Adrenal gland (tissue), 19 donors: ENCODE measurements at regions of chr9 and their contacts with region 1.

Region 1: DNA sequence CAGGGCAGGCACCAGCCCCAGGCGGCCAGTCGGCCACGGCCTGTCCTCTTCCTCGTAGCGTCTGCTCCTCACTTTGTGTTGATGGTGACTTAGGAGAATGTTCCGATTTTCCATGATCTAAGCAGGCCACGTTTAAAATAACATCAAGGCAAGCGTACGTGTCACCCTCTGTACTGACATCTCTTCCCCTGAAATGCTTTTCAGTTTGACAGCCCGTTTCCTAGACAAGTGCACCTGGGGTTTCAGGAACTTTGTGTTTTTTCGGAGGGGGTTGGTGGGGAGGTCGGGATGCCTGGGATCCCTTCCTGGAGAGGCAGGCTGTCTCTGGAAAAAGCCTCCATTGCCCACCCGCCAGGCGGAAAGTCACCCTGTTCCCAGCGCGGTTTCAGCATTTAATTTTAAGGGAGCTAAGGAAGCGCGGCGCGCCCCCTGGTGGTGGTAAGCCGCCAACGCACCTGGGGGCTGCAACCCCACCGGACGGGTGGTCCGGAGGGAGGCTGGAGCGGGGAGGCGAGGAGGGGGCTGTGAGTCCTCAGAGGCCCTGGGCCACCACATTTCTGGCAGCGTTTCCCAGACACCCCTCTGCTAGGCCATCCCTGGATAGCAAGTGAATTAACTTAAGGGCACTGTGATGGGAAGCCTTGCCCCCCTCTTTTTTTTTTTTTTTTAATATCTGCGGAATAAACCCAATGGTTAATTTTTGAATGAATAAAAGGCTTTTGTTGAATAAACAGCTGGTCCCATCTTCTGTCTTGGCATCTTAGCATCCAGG is 29.5 kb upstream of the HMCN2 start:
- DNase-seq: peak; percentile 53 to 88 (median 69)
- H3K4me3 ChIP-seq: no peak overlapping the region
- H3K27ac ChIP-seq: peak overlapping the region in 1 of 5 donors; percentile 41
- H3K4me1 ChIP-seq: peaks cover 9 to 20% of the 10 kb centered on the region in 2 donors
- H3K27me3 ChIP-seq: no peaks in the 10 kb centered on the region
- CTCF ChIP-seq: peak; percentile 97 to 100 (median 98)
- POLR2A ChIP-seq: no peak

Region 2: GRCh38 chr9:129630967-129631672 is 605.0 kb before region 1 on chr9:
- intact Hi-C with region 1: no loop called
- DNase-seq: peak in 6 of 7 donors; percentile 61 to 79 (median 75)
- H3K4me3 ChIP-seq: peak overlapping the region in 1 of 4 donors; percentile 32
- H3K27ac ChIP-seq: peak overlapping the region; percentile 9 to 95 (median 26)
- H3K4me1 ChIP-seq: peaks cover 38 to 50% of the 10 kb centered on the region in 2 donors
- H3K27me3 ChIP-seq: no peaks in the 10 kb centered on the region
- CTCF ChIP-seq: peak in 2 of 6 experiments; percentile 12 to 13
- POLR2A ChIP-seq: peak in 1 of 2 donors; percentile 16

Region 3: DNA sequence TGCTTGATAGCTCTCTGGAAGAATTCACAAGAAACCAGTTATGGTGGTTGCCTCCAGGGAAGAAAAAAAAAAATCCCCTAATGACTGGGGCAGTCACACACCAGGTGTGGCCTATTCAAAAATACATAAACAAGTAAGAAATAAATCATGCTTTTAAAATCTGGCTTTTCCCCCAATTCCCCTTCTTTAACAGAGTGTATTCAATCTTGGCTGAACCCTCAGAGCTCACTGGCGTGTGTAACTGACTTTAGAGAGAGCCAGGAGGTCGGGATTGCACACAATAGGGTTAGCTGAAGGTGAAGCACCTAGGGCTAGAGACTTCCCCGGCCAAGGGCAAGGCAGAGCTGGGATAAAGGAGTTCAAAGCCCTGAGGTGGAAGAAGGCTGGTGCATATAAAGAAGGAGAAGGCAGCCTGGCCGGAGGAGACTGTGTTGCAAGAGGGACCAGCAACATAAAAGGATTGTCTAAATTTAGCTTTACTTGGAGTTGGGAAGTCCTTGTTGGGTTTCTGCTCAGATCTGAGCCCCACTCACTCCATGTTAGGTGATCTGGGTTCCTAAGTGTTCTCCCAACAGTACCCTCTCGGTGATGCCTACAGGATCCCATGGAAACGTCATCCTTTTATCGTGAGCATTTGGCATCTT is 212.8 kb before region 1 on chr9:
- intact Hi-C with region 1: no loop called
- DNase-seq: peak in 1 of 7 donors; percentile 41
- H3K4me3 ChIP-seq: no peak overlapping the region
- H3K27ac ChIP-seq: no peak overlapping the region
- H3K4me1 ChIP-seq: peaks cover 0 to 24% of the 10 kb centered on the region in 2 donors
- H3K27me3 ChIP-seq: no peaks in the 10 kb centered on the region
- CTCF ChIP-seq: no peak
- POLR2A ChIP-seq: no peak

Region 4: GRCh38 chr9:130107234-130107861 is 128.7 kb before region 1 on chr9:
- intact Hi-C with region 1: loop called (anchors 2 to 5 kb)
- DNase-seq: peak; percentile 77 to 96 (median 89)
- H3K4me3 ChIP-seq: no peak overlapping the region
- H3K27ac ChIP-seq: peak overlapping the region in 2 of 5 donors; percentile 29 to 35
- H3K4me1 ChIP-seq: peaks cover 0 to 18% of the 10 kb centered on the region in 2 donors
- H3K27me3 ChIP-seq: no peaks in the 10 kb centered on the region
- CTCF ChIP-seq: peak; percentile 75 to 90 (median 81)
- POLR2A ChIP-seq: no peak